Ovary (tissue), 10 donors: ENCODE measurements at regions of chr1 and their contacts with region 1.

Region 1: DNA sequence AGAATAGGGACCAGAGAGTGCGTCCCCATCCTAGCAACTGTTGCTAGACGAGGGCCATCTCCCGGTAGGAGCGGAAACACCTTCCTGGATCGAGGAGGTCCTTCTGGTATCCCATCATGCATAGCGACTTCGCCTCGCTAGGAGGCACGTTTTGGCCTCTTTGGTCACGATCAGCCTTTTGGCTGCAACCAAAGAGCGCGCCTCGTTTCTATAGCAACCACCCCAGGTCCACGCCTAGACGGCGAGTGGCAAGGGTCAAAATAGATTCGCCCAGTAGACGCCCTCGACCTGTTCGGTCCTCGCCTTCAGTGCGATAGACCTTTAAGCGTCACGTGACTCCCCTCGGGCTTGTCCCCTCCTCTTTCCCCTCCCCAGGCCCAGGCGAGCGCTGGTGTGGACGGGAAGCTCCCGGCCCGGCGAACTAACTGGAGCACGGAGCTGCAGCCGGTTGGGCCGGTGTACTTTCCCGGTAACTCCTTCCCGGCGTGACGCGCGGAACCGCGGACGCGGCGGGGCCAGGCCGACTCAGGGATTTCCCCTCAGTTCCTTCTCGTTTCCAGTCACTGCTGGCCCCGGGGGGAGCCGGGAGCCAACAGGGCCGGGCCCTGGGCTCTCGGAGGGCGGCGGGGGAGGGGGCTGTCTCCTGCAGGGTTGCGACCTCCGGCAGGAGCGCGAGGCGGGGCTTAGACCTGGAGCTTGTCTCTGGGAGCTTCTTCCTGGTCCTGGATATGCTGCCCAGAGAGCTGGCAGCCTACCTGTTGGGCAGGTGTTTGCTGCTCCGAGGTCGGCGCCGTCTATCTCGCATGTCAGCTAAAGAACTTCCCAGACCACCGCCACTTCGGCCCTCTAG is at the start of gene DNAJC16:
- DNase-seq: peak; percentile 98 to 100 (median 99)
- H3K4me3 ChIP-seq: peak within 1 kb of the TSS; percentile 87
- H3K27ac ChIP-seq: peak within 1 kb of the TSS; percentile 86 to 97
- H3K4me1 ChIP-seq: peaks cover 4% of the 10 kb centered on the region
- H3K27me3 ChIP-seq: no peaks in the 10 kb centered on the region
- CTCF ChIP-seq: peak in 1 of 3 donors; percentile 45
- EP300 ChIP-seq: peak; percentile 91
- POLR2A ChIP-seq: peak; percentile 64
- total RNA-seq, gene DNAJC16: 12.3 to 33.3 (median 17.9) TPM

Region 2: DNA sequence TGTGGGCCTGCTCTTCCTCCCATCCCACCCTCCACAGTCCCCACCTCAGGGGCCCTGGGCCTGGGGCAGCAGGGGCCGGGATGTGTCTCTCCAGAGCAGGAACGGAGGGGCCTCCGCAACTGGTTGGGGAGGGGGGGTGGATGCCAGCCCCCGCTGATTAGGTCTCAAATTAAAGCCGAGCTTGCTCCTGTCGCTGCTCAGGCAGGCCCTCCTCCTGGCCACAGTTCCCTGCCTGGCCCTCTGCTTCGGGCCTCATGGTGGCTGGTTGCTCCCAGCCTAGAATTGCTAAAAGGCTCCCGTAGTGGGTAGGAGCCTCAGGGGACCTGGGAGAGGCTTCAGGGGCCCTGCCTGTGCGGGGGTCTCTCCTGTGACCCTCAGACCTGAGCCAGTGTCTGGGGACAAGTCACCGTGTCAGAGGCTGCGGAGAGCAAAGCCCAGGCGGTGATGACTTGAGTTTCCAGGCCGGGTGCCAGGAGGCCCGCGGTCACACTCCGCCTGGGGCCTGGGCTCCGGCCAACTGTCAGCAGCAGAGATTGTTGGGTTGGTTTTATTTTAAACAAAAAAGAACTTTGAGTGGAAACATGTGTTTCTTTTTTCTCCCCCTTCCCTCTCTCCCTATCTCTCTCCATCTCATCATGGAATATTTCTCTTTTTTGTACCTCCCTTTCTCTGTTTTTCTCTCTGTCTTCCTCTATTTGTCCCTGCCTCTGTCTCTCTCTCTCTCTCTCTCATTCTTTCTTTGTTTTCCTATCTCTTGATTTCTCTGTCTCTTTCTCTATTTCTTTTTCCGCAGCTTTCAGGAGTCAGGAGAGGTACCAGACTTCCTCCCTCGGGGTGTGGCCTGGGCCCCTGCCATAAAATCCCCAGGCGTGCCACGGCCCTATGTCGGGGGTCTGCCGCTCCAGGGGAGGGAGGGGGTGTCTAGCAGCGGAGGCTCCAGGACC is 649.2 kb after region 1 on chr1:
- intact Hi-C with region 1: loop called in 1 of 4 experiments (anchors 5 kb)
- DNase-seq: peak; percentile 90 to 94 (median 94)
- H3K4me3 ChIP-seq: no peak overlapping the region
- H3K27ac ChIP-seq: peak overlapping the region; percentile 59 to 81
- H3K4me1 ChIP-seq: peaks cover 11% of the 10 kb centered on the region
- H3K27me3 ChIP-seq: no peaks in the 10 kb centered on the region
- CTCF ChIP-seq: no peak
- EP300 ChIP-seq: no peak
- POLR2A ChIP-seq: no peak